H1 (cell line): ENCODE measurements at regions of chr20 and their contacts with region 1.

Region 1: GRCh38 chr20:23200918-23201317 is 114.8 kb upstream of the CD93 start:
- DNase-seq: peak; percentile 34 to 70
- H3K4me3 ChIP-seq: no peak overlapping the region
- H3K27ac ChIP-seq: no peak overlapping the region
- H3K4me1 ChIP-seq: peaks cover 9 to 14% (median 10%) of the 10 kb centered on the region in 4 experiments
- H3K27me3 ChIP-seq: peaks cover 0 to 2% (median 0%) of the 10 kb centered on the region in 4 experiments; a peak in 2 of 7 replicates
- CTCF ChIP-seq: peak; percentile 79 to 84 (median 84)
- EP300 ChIP-seq: peak in 1 of 2 experiments; percentile 28; a peak in 1 of 3 replicates
- POLR2A ChIP-seq: no peak
- RAD21 ChIP-seq: peak; percentile 90 to 93

Region 2: GRCh38 chr20:23079016-23079351 is 121.9 kb before region 1 on chr20:
- CTCF ChIA-PET with region 1: interaction called, 13 read pairs
- POLR2A ChIA-PET with region 1: no interaction called
- DNase-seq: peak; percentile 19 to 70
- H3K4me3 ChIP-seq: no peak overlapping the region
- H3K27ac ChIP-seq: no peak overlapping the region
- H3K4me1 ChIP-seq: peaks cover 0 to 7% (median 0%) of the 10 kb centered on the region in 4 experiments; a peak in 1 of 7 replicates
- H3K27me3 ChIP-seq: no peaks in the 10 kb centered on the region
- CTCF ChIP-seq: peak; percentile 68 to 90 (median 88)
- EP300 ChIP-seq: no peak
- POLR2A ChIP-seq: no peak
- RAD21 ChIP-seq: peak; percentile 52 to 63

Region 3: GRCh38 chr20:23092384-23092756 is 108.5 kb before region 1 on chr20:
- CTCF ChIA-PET with region 1: interaction called, 12 read pairs
- POLR2A ChIA-PET with region 1: no interaction called
- DNase-seq: no peak
- H3K4me3 ChIP-seq: no peak overlapping the region
- H3K27ac ChIP-seq: no peak overlapping the region
- H3K4me1 ChIP-seq: peaks cover 0 to 4% (median 2%) of the 10 kb centered on the region in 4 experiments; a peak in 3 of 7 replicates
- H3K27me3 ChIP-seq: no peaks in the 10 kb centered on the region
- CTCF ChIP-seq: no peak
- EP300 ChIP-seq: no peak
- POLR2A ChIP-seq: no peak
- RAD21 ChIP-seq: no peak

Region 4: DNA sequence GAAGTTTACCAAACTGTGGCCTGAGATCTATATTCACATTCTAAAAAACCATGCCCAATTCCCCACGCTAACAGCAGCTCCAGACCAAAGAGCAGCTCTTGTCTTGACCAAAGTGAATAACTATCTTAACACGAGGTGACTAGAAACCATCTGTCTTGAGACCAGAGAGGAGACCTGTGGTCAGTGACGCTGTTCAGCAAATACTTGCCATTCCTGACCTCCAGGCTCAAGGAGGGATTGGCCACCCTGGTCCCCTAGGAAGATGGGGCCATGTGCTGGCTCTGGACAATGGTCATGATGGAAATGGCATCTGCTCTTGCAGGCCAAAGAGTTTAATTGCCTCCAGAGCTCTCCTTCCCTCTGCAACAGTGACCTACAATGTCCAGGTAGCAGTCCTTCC is 10.3 kb before region 1 on chr20:
- CTCF ChIA-PET with region 1: interaction called, 13 read pairs
- POLR2A ChIA-PET with region 1: no interaction called
- DNase-seq: no peak
- H3K4me3 ChIP-seq: no peak overlapping the region; a peak in 1 of 8 replicates
- H3K27ac ChIP-seq: no peak overlapping the region
- H3K4me1 ChIP-seq: no peaks in the 10 kb centered on the region
- H3K27me3 ChIP-seq: no peaks in the 10 kb centered on the region
- CTCF ChIP-seq: no peak
- EP300 ChIP-seq: no peak
- POLR2A ChIP-seq: no peak
- RAD21 ChIP-seq: no peak

Region 5: DNA sequence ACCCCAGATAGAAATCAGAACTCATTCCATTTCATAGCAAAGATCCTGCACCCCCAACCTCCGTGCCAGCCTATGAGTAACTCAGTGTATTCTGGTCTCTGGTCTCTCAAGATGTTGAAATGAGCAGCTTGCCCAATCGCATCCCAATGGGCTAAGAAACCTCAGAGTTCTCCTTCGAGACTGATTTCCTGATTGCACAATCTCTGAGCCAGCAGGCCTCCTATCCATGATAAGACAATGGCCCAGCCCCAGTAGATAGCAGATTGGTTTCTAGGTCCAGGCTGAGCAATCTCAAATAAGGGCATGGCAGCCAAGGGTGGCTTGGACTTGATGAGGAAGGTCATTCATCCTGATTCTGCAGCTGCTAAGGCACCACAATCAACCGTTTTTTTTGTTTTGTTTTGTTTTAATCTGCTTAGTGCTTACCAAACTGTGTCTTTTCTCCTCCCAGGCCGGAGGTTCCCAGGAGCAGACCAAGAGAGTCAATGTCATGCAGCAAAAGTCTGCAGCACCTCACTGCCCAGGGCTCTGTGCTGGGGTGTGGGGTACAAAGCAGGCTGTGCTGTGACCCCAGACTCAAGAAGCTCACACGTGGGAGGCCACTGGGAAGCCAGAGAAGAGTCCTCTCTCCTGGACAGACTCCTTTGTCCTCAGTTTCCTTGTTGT is 24.6 kb after region 1 on chr20:
- CTCF ChIA-PET with region 1: interaction called, 15 read pairs
- POLR2A ChIA-PET with region 1: no interaction called
- DNase-seq: no peak
- H3K4me3 ChIP-seq: no peak overlapping the region
- H3K27ac ChIP-seq: no peak overlapping the region
- H3K4me1 ChIP-seq: no peaks in the 10 kb centered on the region
- H3K27me3 ChIP-seq: no peaks in the 10 kb centered on the region
- CTCF ChIP-seq: no peak
- EP300 ChIP-seq: no peak
- POLR2A ChIP-seq: no peak
- RAD21 ChIP-seq: no peak

Region 6: DNA sequence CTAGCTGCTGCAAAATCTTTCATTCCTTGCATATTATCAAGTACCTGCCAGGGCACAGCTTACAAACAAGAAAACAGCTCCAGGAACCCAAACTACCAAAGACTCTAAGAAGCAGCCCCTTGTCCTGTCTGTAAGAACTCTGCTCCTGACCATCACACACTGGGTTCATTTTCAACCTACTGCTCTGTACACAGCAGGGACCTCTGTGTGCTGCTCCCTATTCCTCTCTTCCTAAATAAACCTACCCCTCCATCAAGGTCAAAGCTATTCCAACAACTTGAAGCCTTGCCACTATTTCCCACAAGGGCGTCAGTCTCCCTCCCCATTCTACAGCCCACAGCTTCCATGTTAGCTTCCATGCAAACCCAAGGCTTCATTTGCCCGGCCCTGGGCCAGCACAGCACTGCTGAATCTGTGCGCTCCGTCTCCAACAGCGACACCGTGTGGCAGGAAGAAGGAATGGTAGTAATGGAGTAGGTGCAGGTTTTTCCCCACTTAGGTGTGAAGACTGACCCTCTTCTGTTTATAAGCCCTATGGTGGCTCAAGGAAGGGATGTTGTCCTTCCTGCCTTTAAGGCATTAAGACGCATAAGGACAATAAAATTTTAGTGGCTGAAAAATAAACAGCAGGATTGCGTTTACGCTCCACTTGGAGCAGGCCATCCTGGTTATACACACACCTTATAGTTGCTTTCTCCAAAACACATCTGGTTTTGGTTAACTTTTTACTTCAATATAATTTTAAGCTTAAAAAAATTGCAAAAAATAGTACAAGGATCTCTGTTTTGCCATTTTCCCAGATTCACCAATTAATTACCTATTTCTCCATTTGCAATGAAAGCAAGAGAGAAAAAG is 34.5 kb after region 1 on chr20:
- CTCF ChIA-PET with region 1: interaction called, 16 read pairs
- POLR2A ChIA-PET with region 1: interaction called, 3 read pairs
- DNase-seq: peak; percentile 39 to 71
- H3K4me3 ChIP-seq: no peak overlapping the region
- H3K27ac ChIP-seq: no peak overlapping the region
- H3K4me1 ChIP-seq: no peaks in the 10 kb centered on the region; a peak in 1 of 7 replicates
- H3K27me3 ChIP-seq: no peaks in the 10 kb centered on the region
- CTCF ChIP-seq: peak; percentile 88 to 94 (median 91)
- EP300 ChIP-seq: no peak
- POLR2A ChIP-seq: no peak
- RAD21 ChIP-seq: peak; percentile 90 to 91

Region 7: DNA sequence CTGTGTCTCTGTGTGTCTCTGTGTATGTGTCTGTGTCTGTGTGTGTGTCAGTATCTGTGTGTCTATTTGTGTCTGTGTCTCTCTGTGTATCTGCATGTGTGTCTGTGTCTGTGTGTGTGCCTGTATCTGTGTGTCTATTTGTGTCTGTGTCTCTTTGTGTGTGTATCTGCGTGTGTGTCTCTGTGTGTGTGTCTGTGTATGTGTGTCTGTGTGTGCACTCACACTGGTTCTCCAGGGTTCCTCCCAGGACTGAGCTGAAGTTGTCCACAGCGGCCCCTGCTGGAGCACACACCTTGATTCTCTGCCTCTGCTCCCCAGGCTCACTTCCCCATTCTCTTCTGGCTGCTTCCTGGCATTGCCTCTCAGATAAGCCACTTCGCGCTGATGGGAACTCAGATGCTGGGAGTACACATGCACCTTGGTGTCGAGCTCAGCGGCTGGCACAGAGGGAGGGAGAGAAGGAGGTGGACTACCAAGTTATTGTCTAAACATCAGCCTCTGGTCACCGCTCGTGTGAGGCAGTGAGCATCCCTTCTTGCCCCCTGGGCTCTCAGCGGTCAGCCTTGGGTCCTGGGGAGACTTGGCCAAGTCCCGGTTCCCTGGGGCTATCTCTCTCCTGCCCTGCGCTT is 44.7 kb after region 1 on chr20:
- CTCF ChIA-PET with region 1: interaction called, 13 read pairs
- POLR2A ChIA-PET with region 1: no interaction called
- DNase-seq: peak in 1 of 2 experiments; percentile 66
- H3K4me3 ChIP-seq: no peak overlapping the region
- H3K27ac ChIP-seq: no peak overlapping the region
- H3K4me1 ChIP-seq: no peaks in the 10 kb centered on the region
- H3K27me3 ChIP-seq: no peaks in the 10 kb centered on the region
- CTCF ChIP-seq: peak; percentile 59 to 86 (median 83)
- EP300 ChIP-seq: no peak
- POLR2A ChIP-seq: no peak
- RAD21 ChIP-seq: peak; percentile 47 to 62